PC-9 (cell line): ENCODE measurements at regions of chr16 and their contacts with region 1.

Region 1: DNA sequence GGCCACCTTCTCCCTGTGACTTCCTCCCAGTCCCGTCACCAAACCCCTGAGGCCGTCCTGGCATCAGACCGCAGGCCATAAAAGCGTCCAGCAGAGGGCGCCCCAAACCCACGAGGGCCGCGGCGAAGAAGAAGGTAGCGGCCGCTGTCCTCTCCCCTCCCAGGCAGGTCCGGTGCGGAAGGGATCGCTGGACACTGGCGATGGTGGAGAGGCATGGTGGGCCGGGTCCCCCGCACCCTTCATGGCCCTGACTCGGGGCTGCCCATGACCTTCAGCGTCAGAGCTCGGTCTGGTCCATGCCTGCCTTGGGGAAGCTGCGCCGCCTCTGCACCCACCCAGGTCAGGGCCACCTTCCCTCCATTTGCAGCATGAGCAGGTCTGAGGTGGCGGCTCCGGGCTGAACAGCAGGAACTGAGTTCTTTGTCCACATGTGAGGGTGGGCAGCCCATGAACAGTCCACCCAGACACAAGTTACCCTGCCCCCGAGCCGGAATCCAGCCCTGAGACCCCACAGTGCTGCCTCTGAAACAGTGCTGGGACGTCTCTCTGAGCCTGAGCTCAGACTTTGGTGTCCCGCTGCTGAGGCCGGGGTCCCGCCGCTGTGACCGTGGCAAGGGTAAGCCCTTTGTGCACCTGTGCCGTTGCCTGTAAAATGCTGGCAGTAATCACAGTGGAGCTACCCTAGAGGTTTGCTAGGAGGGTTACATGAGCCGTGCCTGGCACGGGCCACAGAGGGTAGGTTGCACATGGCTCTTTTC is 40.8 kb upstream of the CMIP start:
- DNase-seq: peak; percentile 80 to 94
- H3K4me3 ChIP-seq: no peak overlapping the region; the same call in 1 of the 2 replicates
- H3K27ac ChIP-seq: no peak overlapping the region
- H3K4me1 ChIP-seq: peaks cover 50% of the 10 kb centered on the region
- H3K27me3 ChIP-seq: no peaks in the 10 kb centered on the region
- CTCF ChIP-seq: peak; percentile 91

Region 2: DNA sequence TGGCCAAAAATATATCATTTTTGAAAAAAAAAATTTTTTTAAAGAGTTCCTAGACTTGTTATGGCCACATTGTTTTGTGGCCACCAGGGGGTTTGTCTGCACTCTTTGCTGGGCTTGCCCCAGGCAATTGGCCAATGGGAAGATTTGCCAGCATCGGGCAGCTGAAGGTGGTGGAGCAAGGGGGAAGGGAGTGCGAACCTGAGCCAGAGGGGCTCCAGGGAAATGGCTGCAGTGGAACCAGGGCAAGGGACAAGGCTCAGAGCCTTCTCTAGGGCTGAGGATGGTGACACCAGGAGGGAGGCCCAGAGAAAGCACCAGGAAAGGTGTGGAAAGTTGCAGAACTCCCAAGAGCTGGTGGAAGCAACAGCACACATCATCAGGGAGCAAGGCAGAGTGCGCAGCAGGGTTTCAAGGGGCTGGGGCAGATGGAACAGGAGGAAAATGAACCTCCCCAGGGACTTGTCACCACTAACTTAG is 25.3 kb after region 1 on chr16:
- CTCF ChIA-PET with region 1: interaction called, 14 read pairs
- POLR2A ChIA-PET with region 1: no interaction called
- intact Hi-C with region 1: no loop called
- DNase-seq: peak; percentile 44 to 52
- H3K4me3 ChIP-seq: no peak overlapping the region
- H3K27ac ChIP-seq: no peak overlapping the region
- H3K4me1 ChIP-seq: no peaks in the 10 kb centered on the region; the same call in 1 of the 2 replicates
- H3K27me3 ChIP-seq: no peaks in the 10 kb centered on the region
- CTCF ChIP-seq: peak; percentile 67

Region 3: DNA sequence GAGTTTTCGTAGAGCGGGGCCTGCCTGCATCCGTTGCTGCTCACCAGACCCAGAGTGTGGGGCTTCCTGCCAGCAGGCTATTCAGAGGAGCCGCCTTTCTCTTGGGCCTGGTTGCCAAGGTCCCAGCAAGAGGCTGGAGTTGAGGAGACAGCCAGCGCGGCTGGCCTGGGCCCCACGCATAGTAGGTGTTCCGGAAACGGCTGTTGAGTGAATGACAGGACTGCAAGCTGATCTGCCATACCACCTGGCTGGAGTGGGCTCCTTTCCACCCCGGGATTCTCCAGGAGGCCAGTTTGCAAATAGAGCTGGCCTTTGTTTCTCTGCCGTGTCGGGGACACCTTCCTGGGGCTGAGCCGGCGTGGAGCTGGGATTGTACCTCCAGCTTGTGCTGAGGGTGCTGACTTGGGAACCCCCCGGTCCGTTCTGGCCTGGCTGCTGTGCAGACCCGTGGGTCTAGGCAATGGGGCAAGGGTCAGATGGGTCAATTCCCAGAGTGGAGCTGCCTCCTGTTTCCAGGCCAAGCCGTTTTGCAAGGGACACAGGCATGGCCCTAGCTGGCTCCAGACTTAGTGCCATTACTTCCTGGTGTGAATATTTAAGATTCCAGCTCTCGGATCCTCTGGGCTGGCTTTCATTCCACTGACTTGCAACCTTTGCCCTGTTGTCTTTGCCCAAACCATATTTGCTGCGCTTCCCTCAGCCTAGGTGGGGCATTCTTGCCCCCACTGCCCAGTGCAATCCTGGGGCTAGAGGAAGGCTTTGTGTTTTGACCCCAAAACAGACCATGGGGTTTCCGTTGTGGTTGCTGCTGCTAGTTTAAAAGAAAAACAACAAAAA is 109.6 kb after region 1 on chr16:
- CTCF ChIA-PET with region 1: no interaction called
- POLR2A ChIA-PET with region 1: no interaction called
- intact Hi-C with region 1: loop called (anchors 1 kb)
- DNase-seq: peak; percentile 61 to 89
- H3K4me3 ChIP-seq: no peak overlapping the region
- H3K27ac ChIP-seq: peak overlapping the region; percentile 82
- H3K4me1 ChIP-seq: peaks cover 67% of the 10 kb centered on the region
- H3K27me3 ChIP-seq: no peaks in the 10 kb centered on the region
- CTCF ChIP-seq: no peak

Region 4: GRCh38 chr16:81531419-81531821 is 127.6 kb after region 1 on chr16:
- CTCF ChIA-PET with region 1: no interaction called
- POLR2A ChIA-PET with region 1: interaction called, 4 read pairs
- intact Hi-C with region 1: loop called (anchors 1 kb)
- DNase-seq: peak in 1 of 2 experiments; percentile 84
- H3K4me3 ChIP-seq: no peak overlapping the region
- H3K27ac ChIP-seq: no peak overlapping the region
- H3K4me1 ChIP-seq: peaks cover 19% of the 10 kb centered on the region
- H3K27me3 ChIP-seq: no peaks in the 10 kb centered on the region
- CTCF ChIP-seq: no peak

Region 5: GRCh38 chr16:81600901-81601428 is 197.2 kb after region 1 on chr16:
- CTCF ChIA-PET with region 1: no interaction called
- POLR2A ChIA-PET with region 1: no interaction called
- intact Hi-C with region 1: loop called (anchors 1 kb)
- DNase-seq: peak in 1 of 2 experiments; percentile 53
- H3K4me3 ChIP-seq: no peak overlapping the region
- H3K27ac ChIP-seq: no peak overlapping the region
- H3K4me1 ChIP-seq: peaks cover 17% of the 10 kb centered on the region
- H3K27me3 ChIP-seq: no peaks in the 10 kb centered on the region
- CTCF ChIP-seq: no peak

Region 6: GRCh38 chr16:81680444-81681275 is 276.9 kb after region 1 on chr16:
- CTCF ChIA-PET with region 1: interaction called, 11 read pairs
- POLR2A ChIA-PET with region 1: no interaction called
- intact Hi-C with region 1: no loop called
- DNase-seq: no peak
- H3K4me3 ChIP-seq: no peak overlapping the region
- H3K27ac ChIP-seq: no peak overlapping the region
- H3K4me1 ChIP-seq: no peaks in the 10 kb centered on the region
- H3K27me3 ChIP-seq: no peaks in the 10 kb centered on the region
- CTCF ChIP-seq: no peak

Region 7: GRCh38 chr16:81723098-81723723 is 319.4 kb after region 1 on chr16:
- CTCF ChIA-PET with region 1: no interaction called
- POLR2A ChIA-PET with region 1: no interaction called
- intact Hi-C with region 1: loop called (anchors 1 kb)
- DNase-seq: peak; percentile 38 to 74
- H3K4me3 ChIP-seq: no peak overlapping the region
- H3K27ac ChIP-seq: no peak overlapping the region
- H3K4me1 ChIP-seq: no peaks in the 10 kb centered on the region
- H3K27me3 ChIP-seq: no peaks in the 10 kb centered on the region
- CTCF ChIP-seq: peak; percentile 80